Gastrocnemius medialis (tissue), 4 donors: ENCODE measurements at regions of chr22 and their contacts with region 1.

Region 1: GRCh38 chr22:40436505-40437451 is 66.4 kb downstream of the SGSM3 start:
- DNase-seq: peak in 1 of 2 donors; percentile 40
- ATAC-seq: peak; percentile 59 to 79
- H3K4me3 ChIP-seq: peak overlapping the region; percentile 19 to 38 (median 32)
- H3K27ac ChIP-seq: peak overlapping the region; percentile 78 to 91 (median 86)
- H3K4me1 ChIP-seq: peaks cover 34 to 40% of the 10 kb centered on the region in 2 donors
- H3K27me3 ChIP-seq: no peaks in the 10 kb centered on the region
- CTCF ChIP-seq: peak; percentile 73 to 83 (median 77)
- POLR2A ChIP-seq: no peak

Region 2: GRCh38 chr22:40487663-40488249 is 51.0 kb after region 1 on chr22:
- in situ Hi-C with region 1: loop called in 1 of 4 experiments (anchors 10 kb)
- intact Hi-C with region 1: loop called (anchors 1 kb)
- DNase-seq: no peak
- ATAC-seq: no peak
- H3K4me3 ChIP-seq: no peak overlapping the region
- H3K27ac ChIP-seq: peak overlapping the region; percentile 45 to 74 (median 52)
- H3K4me1 ChIP-seq: peaks cover 53 to 60% of the 10 kb centered on the region in 2 donors
- H3K27me3 ChIP-seq: no peaks in the 10 kb centered on the region
- CTCF ChIP-seq: peak; percentile 44 to 66 (median 54)
- POLR2A ChIP-seq: no peak

Region 3: DNA sequence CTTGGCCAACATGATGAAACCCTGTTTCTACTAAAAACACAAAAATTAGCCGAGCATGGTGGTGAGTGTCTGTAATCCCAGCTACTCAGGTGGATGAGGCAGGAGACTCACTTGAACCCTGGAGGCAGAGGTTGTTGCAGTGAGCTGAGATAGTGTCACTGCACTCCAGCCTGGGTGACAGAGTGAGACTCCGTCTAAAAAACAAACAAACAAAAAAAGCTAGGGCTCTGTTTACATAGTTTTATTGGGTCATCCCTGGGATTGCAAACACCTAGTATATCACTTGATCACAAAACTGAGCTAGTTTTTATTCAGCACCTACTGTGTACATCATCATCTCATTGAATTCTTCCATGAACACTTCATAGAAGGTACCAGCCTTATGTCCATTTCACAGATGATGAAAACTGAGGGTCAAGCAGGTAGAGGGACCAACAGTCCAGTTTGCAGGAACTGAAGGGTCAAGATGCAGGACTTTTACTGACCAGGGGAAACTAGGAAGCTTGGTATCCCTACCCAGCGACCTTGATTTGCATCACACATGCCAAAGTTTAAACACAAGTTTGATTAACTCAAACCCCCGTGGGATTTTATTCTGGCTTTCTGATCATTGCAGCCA is 208.9 kb after region 1 on chr22:
- in situ Hi-C with region 1: loop called (anchors 5 kb)
- intact Hi-C with region 1: loop called (anchors 1 kb)
- DNase-seq: no peak
- ATAC-seq: no peak
- H3K4me3 ChIP-seq: no peak overlapping the region
- H3K27ac ChIP-seq: peak overlapping the region in 3 of 4 donors; percentile 69 to 79 (median 71)
- H3K4me1 ChIP-seq: peaks cover 3 to 5% of the 10 kb centered on the region in 2 donors
- H3K27me3 ChIP-seq: no peaks in the 10 kb centered on the region
- CTCF ChIP-seq: no peak
- POLR2A ChIP-seq: no peak